Body of pancreas (tissue), 4 donors: ENCODE measurements at regions of chr1 and their contacts with region 1.

Region 1: GRCh38 chr1:109193653-109194590 is 19.8 kb upstream of the SARS1 start:
- DNase-seq: peak; percentile 41 to 65 (median 53)
- ATAC-seq: peak; percentile 65
- H3K4me3 ChIP-seq: no peak overlapping the region
- H3K27ac ChIP-seq: no peak overlapping the region
- H3K4me1 ChIP-seq: peaks cover 25% of the 10 kb centered on the region
- H3K27me3 ChIP-seq: no peaks in the 10 kb centered on the region
- CTCF ChIP-seq: peak; percentile 47 to 82 (median 75)
- POLR2A ChIP-seq: no peak

Region 2: GRCh38 chr1:109099938-109100773 is 93.8 kb before region 1 on chr1:
- intact Hi-C with region 1: loop called (anchors 10 kb)
- DNase-seq: peak; percentile 96 to 97 (median 96)
- ATAC-seq: peak; percentile 98
- H3K4me3 ChIP-seq: peak overlapping the region; percentile 75 to 90
- H3K27ac ChIP-seq: peak overlapping the region; percentile 86 to 90 (median 86)
- H3K4me1 ChIP-seq: peaks cover 18% of the 10 kb centered on the region
- H3K27me3 ChIP-seq: no peaks in the 10 kb centered on the region
- CTCF ChIP-seq: peak; percentile 74 to 97 (median 90)
- POLR2A ChIP-seq: peak; percentile 90 to 99 (median 98)

Region 3: DNA sequence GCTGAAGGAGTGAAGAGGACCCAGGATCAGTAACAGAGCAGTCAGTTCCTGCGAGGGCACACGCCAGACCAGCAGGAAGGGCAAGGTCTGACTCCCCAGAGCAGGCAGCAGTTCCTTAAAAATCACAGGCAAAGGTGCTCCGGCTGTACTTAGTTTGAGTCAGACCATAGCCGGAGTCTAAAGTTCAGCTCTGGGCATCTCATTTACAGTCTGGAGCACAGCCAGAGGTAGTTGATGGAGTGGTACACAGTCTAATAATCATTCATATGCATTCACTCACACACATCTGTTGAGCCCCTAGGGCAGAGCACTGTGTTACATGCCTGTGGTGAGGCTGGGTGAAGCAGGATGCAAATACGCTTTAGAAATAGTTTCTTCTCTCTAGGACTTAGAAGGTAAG is 322.9 kb after region 1 on chr1:
- intact Hi-C with region 1: no loop called
- DNase-seq: no peak
- ATAC-seq: no peak
- H3K4me3 ChIP-seq: no peak overlapping the region
- H3K27ac ChIP-seq: no peak overlapping the region
- H3K4me1 ChIP-seq: no peaks in the 10 kb centered on the region
- H3K27me3 ChIP-seq: no peaks in the 10 kb centered on the region
- CTCF ChIP-seq: no peak
- POLR2A ChIP-seq: no peak